Stomach (tissue), 19 donors: ENCODE measurements at regions of chr20 and their contacts with region 1.

Region 1: DNA sequence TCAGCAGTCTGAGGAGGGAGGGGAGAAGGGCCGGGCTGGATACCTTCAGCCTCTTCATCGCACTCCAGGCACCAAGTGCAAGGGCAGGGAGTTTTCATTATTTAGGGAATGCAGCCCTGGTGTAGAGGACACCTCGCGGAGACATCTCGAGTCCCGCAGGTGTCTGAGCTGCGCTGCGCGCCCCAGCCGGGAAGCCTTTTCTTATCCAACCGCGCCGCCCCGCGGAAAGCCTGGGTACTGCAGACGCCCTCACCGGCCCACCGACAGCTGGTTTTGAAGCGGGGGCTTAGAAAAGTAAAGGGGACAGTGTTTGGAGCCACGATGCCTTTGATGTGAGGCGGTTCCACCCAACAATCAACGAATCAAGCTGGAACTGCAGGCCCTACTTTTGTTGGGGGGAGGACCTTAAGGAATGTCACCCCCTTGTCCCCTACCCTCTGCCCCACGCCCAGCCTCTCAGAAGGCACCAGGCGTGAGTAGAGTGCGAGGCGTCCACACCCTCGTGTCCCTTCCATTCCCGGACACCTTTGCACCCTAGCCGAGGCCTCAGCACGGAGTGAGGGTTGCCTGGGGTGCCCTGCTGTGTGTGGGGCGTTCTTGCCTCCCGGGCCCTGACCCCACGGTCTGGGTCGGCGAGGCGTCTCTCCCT is 8.6 kb downstream of the NKX2-2 start:
- DNase-seq: peak; percentile 78
- H3K4me3 ChIP-seq: peak overlapping the region; percentile 36 to 63 (median 48)
- H3K27ac ChIP-seq: no peak overlapping the region
- H3K4me1 ChIP-seq: peaks cover 22 to 46% (median 34%) of the 10 kb centered on the region in 4 donors
- H3K27me3 ChIP-seq: peaks cover 44 to 99% (median 71%) of the 10 kb centered on the region in 3 donors
- CTCF ChIP-seq: peak in 6 of 7 experiments; percentile 65 to 98 (median 94)
- EP300 ChIP-seq: no peak
- POLR2A ChIP-seq: no peak

Region 2: GRCh38 chr20:20843982-20844381 is 661.3 kb before region 1 on chr20:
- intact Hi-C with region 1: loop called (anchors 5 kb)
- DNase-seq: peak; percentile 48 to 56
- H3K4me3 ChIP-seq: no peak overlapping the region
- H3K27ac ChIP-seq: no peak overlapping the region
- H3K4me1 ChIP-seq: peaks cover 0 to 4% (median 0%) of the 10 kb centered on the region in 4 donors
- H3K27me3 ChIP-seq: peaks cover 0 to 15% (median 0%) of the 10 kb centered on the region in 3 donors
- CTCF ChIP-seq: no peak
- EP300 ChIP-seq: no peak
- POLR2A ChIP-seq: no peak

Region 3: GRCh38 chr20:20860078-20860806 is 645.0 kb before region 1 on chr20:
- intact Hi-C with region 1: loop called (anchors 5 kb)
- DNase-seq: peak; percentile 92 to 93
- H3K4me3 ChIP-seq: no peak overlapping the region
- H3K27ac ChIP-seq: no peak overlapping the region
- H3K4me1 ChIP-seq: no peaks in the 10 kb centered on the region
- H3K27me3 ChIP-seq: peaks cover 0 to 16% (median 0%) of the 10 kb centered on the region in 3 donors
- CTCF ChIP-seq: peak in 5 of 7 experiments; percentile 66 to 90 (median 83)
- EP300 ChIP-seq: no peak
- POLR2A ChIP-seq: no peak

Region 4: DNA sequence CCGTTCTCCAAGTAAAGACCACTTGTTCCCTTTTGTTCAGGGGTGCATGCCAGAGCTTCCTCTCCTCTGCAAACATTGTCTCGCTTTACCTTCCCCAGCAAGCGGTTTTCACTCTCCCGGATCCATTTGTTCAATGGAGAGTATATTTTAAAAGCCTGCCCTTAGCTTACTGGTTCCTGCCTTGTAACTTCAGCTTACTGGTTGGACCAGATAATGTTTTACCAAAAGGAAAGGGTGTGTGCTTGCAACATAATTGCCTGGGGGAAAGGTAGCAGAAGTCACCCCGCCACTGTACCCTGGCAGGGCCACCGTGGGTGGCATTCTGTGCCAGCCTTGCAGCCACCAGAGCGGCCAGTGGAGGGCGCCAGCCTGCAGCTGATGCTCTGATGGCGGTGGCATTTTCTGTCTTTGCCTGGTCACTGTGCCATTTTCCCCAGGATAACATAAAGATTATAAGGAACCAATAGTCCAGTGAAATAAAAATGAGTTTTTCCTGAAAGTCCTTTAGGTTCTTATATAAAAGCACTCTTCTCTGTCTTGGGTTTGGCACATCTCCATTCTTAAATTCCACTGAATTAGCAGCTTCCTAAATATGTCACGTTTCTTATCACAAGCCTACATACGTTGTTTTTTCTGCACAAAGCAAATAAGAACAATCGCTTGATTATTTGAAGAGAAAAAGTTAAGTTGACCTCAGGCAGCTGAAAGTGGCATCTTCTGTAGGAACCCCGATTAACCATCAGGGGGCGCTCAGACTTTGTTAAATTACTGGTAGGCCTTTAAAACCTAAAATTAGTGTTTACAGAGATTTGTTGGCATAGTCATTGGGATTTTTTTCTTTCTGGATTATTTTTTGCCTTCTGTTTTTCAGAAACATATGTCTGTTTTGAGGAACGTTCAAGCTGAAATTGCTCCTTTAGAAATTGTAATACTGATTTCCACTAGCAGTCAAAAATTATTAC is 269.5 kb before region 1 on chr20:
- intact Hi-C with region 1: loop called (anchors 5 kb)
- DNase-seq: peak; percentile 64 to 79
- H3K4me3 ChIP-seq: no peak overlapping the region
- H3K27ac ChIP-seq: no peak overlapping the region
- H3K4me1 ChIP-seq: peaks cover 0 to 9% (median 4%) of the 10 kb centered on the region in 4 donors
- H3K27me3 ChIP-seq: no peaks in the 10 kb centered on the region
- CTCF ChIP-seq: peak in 5 of 7 experiments; percentile 24 to 79 (median 59)
- EP300 ChIP-seq: no peak
- POLR2A ChIP-seq: no peak